Mammary epithelial cell (primary cell): ENCODE measurements at regions of chr2 and their contacts with region 1.

Region 1: DNA sequence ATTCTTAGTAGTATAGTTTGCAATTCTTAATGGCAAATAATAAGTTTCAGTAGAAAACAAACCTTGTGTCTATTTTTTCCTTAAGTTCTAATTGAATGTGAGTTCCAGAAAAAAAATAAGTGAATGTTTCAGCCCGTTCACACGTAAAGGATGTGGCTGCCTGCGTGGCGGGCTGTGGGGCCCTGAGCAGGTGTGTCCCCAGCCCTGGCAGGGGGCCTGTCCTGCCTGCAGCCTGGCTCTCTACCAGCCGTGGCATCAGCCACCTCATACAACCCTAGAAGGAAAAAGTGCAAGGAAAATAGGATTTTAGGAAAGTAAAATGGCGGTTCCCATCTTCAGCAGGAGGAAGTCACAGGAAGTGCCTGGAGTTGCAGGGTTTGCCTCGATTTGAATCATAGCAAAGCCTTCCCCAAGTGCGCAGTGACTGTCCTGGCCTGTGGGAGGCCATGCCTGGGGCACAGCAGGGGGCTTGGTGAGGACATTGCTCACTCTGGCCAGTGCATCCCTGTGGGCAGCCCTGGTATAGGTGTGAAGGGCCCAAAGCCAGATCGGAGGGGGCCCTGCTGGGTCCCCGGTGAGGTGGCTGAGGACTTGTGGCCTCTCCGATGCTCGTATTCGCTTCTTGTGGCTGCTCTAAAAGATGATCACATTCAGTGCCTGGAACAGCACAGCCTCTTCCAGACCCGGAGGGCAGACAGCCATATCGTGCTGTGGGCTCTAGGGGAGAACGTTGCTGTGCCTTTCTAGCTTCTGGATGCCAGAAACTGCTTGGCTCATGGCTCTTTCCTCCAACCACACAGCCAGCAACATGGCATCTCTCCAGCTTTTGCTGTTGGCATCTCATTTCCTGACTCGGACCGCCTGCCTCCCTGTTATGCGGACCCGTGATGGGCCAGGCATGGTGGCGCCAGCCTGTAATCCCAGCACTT is 12.6 kb downstream of the DTYMK start:
- DNase-seq: no peak
- H3K4me3 ChIP-seq: no peak overlapping the region
- H3K27ac ChIP-seq: no peak overlapping the region
- H3K4me1 ChIP-seq: no peaks in the 10 kb centered on the region
- H3K27me3 ChIP-seq: no peaks in the 10 kb centered on the region
- CTCF ChIP-seq: no peak

Region 2: DNA sequence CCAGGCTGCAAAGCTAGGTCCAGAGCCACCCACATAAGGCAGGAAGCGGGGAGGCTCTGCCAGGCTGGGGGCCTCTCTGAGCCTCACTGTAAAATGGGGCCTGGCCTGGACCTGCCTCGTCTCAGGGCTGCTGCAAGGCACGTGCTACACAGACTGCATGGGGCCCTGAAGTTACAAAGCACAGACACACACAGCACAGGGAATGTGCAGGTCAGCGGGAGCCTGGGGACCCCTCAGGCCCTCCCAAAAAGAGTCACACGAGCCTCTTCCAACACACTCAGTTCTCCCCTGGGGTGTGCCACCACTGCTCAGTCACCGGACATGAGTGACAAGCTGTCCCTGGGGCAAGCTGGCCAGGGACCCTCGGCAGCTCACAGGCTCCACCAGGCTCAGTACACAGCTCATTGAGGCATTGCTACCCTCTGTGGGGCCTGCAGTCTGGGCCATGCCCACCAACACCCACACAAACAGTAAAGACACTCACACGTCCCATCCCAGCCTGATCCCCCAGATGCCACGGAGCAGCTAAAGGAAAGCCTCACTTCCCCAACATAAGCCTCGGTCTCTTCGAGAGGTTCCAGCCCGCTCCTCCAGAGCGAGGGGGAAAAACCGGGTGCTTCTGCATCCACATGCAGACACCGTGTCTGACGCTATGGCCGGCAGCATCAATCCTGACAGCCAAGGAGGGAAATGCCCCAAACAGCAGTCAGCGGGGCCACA is 81.8 kb before region 1 on chr2:
- CTCF ChIA-PET with region 1: interaction called, 6 read pairs
- dilution Hi-C with region 1: loop called (anchors 5 kb)
- in situ Hi-C with region 1: no loop called
- intact Hi-C with region 1: no loop called
- DNase-seq: no peak
- H3K4me3 ChIP-seq: no peak overlapping the region
- H3K27ac ChIP-seq: no peak overlapping the region
- H3K4me1 ChIP-seq: no peaks in the 10 kb centered on the region
- H3K27me3 ChIP-seq: no peaks in the 10 kb centered on the region
- CTCF ChIP-seq: no peak

Region 3: GRCh38 chr2:241616168-241617125 is 57.6 kb before region 1 on chr2:
- CTCF ChIA-PET with region 1: no interaction called
- dilution Hi-C with region 1: no loop called
- in situ Hi-C with region 1: no loop called
- intact Hi-C with region 1: no loop called
- DNase-seq: no peak
- H3K4me3 ChIP-seq: no peak overlapping the region
- H3K27ac ChIP-seq: no peak overlapping the region
- H3K4me1 ChIP-seq: no peaks in the 10 kb centered on the region
- H3K27me3 ChIP-seq: no peaks in the 10 kb centered on the region
- CTCF ChIP-seq: no peak

Region 4: DNA sequence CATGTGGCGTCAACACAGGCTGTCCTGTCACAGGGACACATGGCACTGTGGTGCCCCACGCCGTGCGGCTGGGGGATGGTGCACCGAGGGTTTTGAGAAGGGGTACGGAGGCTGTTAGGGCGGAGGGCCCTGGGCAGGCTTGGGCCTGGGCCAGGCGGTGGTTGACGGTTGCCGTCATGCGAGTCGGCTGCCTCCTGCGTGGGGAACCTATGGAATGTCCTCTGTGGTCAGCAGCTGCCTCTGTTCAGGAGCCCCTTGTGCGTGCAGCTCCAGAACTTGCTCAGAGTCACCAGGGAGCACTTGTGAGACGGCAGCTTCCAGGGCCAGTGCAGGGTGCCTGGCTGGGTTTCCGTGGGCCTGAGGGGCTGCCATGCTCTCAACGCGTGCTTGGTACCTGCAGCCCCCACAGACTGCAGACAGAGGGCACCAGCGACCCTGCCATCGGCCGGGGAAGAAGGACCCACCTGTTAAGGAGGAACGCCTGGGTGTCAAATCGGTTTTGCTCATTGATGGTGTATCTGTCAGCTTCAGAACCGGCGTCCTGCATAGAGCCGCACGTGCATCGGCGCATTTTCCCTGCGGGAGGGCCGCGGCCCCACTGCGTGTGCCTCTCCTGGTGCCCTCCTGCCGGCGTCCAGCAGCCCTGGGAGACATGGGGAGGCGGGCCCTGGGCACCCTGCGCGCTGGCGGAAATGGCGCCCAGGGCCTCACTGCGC is 50.4 kb after region 1 on chr2:
- CTCF ChIA-PET with region 1: no interaction called
- dilution Hi-C with region 1: loop called (anchors 5 kb)
- in situ Hi-C with region 1: no loop called
- intact Hi-C with region 1: no loop called
- DNase-seq: no peak
- H3K4me3 ChIP-seq: no peak overlapping the region
- H3K27ac ChIP-seq: no peak overlapping the region
- H3K4me1 ChIP-seq: no peaks in the 10 kb centered on the region
- H3K27me3 ChIP-seq: no peaks in the 10 kb centered on the region
- CTCF ChIP-seq: peak in 1 of 2 donors; percentile 35

Region 5: GRCh38 chr2:241859436-241860183 is 185.5 kb after region 1 on chr2:
- CTCF ChIA-PET with region 1: no interaction called
- dilution Hi-C with region 1: no loop called
- in situ Hi-C with region 1: no loop called
- intact Hi-C with region 1: no loop called
- DNase-seq: no peak
- H3K4me3 ChIP-seq: no peak overlapping the region
- H3K27ac ChIP-seq: no peak overlapping the region
- H3K4me1 ChIP-seq: no peaks in the 10 kb centered on the region
- H3K27me3 ChIP-seq: peaks cover 9% of the 10 kb centered on the region
- CTCF ChIP-seq: no peak

Region 6: DNA sequence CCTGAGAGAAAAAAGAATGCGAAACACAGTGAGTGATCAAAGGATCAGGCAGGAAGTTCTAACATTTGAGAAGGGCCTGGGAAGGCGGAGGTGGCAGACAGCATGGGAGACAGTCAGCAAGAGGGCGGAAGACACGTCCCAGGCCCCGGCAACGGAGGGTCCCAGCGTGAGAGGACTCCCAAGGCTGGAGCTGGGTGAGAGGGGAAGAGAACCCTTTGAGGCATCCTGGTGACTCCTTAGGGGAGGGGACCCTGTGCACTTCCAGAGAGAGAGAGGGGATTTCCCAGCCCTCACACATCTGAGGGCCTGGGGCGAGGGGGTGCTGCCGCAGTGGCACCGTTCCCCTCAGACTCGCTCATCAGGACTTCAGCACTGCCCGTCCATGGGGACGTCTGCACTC is 328.9 kb after region 1 on chr2:
- CTCF ChIA-PET with region 1: no interaction called
- dilution Hi-C with region 1: no loop called
- in situ Hi-C with region 1: no loop called
- intact Hi-C with region 1: no loop called
- DNase-seq: no peak
- H3K4me3 ChIP-seq: no peak overlapping the region
- H3K27ac ChIP-seq: no peak overlapping the region
- H3K4me1 ChIP-seq: no peaks in the 10 kb centered on the region
- H3K27me3 ChIP-seq: no peaks in the 10 kb centered on the region
- CTCF ChIP-seq: no peak